Natural killer cell (primary cell): ENCODE measurements at regions of chr11 and their contacts with region 1.

Region 1: GRCh38 chr11:119057000-119057769 is at the start of gene HYOU1:
- DNase-seq: peak; percentile 98
- ATAC-seq: peak; percentile 92 to 99 (median 93)
- H3K4me3 ChIP-seq: peak within 1 kb of the TSS; percentile 70
- H3K4me3 Mint-ChIP-seq: peak within 1 kb of the TSS; percentile 98
- H3K27ac ChIP-seq: peak within 1 kb of the TSS; percentile 77
- H3K27ac Mint-ChIP-seq: peak within 1 kb of the TSS; percentile 96 to 98
- H3K4me1 ChIP-seq: peaks cover 24% of the 10 kb centered on the region
- H3K4me1 Mint-ChIP-seq: peaks cover 33 to 48% of the 10 kb centered on the region in 2 donors
- H3K27me3 ChIP-seq: no peaks in the 10 kb centered on the region
- H3K27me3 Mint-ChIP-seq: no peaks in the 10 kb centered on the region
- CTCF ChIP-seq: no peak
- total RNA-seq, gene HYOU1: 114 to 146 (median 123) TPM

Region 2: DNA sequence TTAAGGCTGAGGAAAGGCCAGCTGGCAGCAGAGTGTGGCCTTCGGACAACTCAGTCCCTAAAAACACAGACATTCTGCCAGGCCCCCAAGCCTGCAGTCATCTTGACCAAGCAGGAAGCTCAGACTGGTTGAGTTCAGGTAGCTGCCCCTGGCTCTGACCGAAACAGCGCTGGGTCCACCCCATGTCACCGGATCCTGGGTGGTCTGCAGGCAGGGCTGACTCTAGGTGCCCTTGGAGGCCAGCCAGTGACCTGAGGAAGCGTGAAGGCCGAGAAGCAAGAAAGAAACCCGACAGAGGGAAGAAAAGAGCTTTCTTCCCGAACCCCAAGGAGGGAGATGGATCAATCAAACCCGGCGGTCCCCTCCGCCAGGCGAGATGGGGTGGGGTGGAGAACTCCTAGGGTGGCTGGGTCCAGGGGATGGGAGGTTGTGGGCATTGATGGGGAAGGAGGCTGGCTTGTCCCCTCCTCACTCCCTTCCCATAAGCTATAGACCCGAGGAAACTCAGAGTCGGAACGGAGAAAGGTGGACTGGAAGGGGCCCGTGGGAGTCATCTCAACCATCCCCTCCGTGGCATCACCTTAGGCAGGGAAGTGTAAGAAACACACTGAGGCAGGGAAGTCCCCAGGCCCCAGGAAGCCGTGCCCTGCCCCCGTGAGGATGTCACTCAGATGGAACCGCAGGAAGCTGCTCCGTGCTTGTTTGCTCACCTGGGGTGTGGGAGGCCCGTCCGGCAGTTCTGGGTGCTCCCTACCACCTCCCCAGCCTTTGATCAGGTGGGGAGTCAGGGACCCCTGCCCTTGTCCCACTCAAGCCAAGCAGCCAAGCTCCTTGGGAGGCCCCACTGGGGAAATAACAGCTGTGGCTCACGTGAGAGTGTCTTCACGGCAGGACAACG is 161.8 kb before region 1 on chr11:
- intact Hi-C with region 1: no loop called
- DNase-seq: peak in 1 of 2 donors; percentile 91
- ATAC-seq: peak in 2 of 3 donors; percentile 32 to 34
- H3K4me3 ChIP-seq: no peak overlapping the region
- H3K4me3 Mint-ChIP-seq: peak overlapping the region; percentile 4
- H3K27ac ChIP-seq: peak overlapping the region; percentile 71
- H3K27ac Mint-ChIP-seq: peak overlapping the region; percentile 74 to 82
- H3K4me1 ChIP-seq: peaks cover 70% of the 10 kb centered on the region
- H3K4me1 Mint-ChIP-seq: peaks cover 36 to 57% of the 10 kb centered on the region in 2 donors
- H3K27me3 ChIP-seq: no peaks in the 10 kb centered on the region
- H3K27me3 Mint-ChIP-seq: no peaks in the 10 kb centered on the region
- CTCF ChIP-seq: no peak

Region 3: GRCh38 chr11:119018074-119018938 is 38.9 kb before region 1 on chr11 and contains the starts of genes RPS25 and TRAPPC4:
- intact Hi-C with region 1: loop called (anchors 5 kb)
- DNase-seq: peak; percentile 91 to 98
- ATAC-seq: peak; percentile 86 to 95 (median 86)
- H3K4me3 ChIP-seq: peak within 1 kb of the TSS; percentile 93
- H3K4me3 Mint-ChIP-seq: peak within 1 kb of the TSS; percentile 99
- H3K27ac ChIP-seq: peak within 1 kb of the TSS; percentile 94
- H3K27ac Mint-ChIP-seq: peak within 1 kb of the TSS; percentile 99
- H3K4me1 ChIP-seq: peaks cover 33% of the 10 kb centered on the region
- H3K4me1 Mint-ChIP-seq: peaks cover 18 to 27% of the 10 kb centered on the region in 2 donors
- H3K27me3 ChIP-seq: no peaks in the 10 kb centered on the region
- H3K27me3 Mint-ChIP-seq: no peaks in the 10 kb centered on the region
- CTCF ChIP-seq: no peak
- total RNA-seq, gene RPS25: 870 to 1,051 (median 887) TPM
- total RNA-seq, gene TRAPPC4: 71.4 to 84.5 (median 77.5) TPM

Region 4: DNA sequence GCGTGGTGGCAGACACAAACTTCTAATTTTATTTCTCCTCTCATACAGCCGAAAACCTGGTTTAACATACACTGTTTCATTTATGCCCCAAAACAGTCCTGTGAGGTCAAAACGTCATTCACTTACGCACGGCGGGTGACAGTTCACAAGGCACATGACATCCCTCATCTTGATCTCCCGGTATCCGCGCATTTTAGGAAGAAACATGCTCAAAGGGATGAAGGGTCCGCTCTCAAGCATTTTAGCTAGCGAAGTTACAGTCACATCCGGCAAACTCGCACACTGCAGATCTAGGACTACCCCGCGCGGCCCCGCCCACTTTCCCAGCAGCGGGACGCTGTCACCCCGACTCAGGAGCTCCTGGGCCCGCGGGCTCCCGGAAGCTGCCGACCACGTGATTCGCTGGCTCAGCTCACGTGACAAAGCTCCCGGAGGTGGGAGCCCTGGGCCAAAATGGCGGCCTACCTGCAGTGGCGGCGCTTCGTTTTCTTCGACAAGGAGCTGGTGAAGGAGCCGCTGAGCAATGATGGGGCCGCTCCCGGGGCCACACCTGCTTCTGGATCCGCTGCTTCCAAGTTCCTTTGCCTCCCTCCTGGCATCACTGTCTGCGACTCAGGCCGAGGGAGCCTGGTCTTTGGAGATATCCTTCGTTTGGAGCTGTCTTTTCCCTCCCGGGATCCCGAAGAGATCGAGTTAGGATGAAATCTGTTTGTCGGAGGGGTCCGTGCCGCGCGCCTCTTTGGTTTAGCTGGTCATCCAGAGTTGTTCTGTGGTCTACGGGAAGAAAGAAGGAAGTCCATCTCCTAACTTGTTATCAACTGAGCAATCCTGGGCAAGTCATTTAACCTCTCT is 10.4 kb after region 1 on chr11 and contains the start of gene VPS11:
- intact Hi-C with region 1: loop called (anchors 1 kb)
- DNase-seq: peak; percentile 95 to 99
- ATAC-seq: peak; percentile 92 to 99 (median 93)
- H3K4me3 ChIP-seq: peak within 1 kb of the TSS; percentile 91
- H3K4me3 Mint-ChIP-seq: peak within 1 kb of the TSS; percentile 95
- H3K27ac ChIP-seq: peak within 1 kb of the TSS; percentile 89
- H3K27ac Mint-ChIP-seq: peak within 1 kb of the TSS; percentile 98 to 99
- H3K4me1 ChIP-seq: peaks cover 19% of the 10 kb centered on the region
- H3K4me1 Mint-ChIP-seq: peaks cover 32 to 33% of the 10 kb centered on the region in 2 donors
- H3K27me3 ChIP-seq: no peaks in the 10 kb centered on the region
- H3K27me3 Mint-ChIP-seq: no peaks in the 10 kb centered on the region
- CTCF ChIP-seq: no peak
- total RNA-seq, gene VPS11: 91.4 to 101 (median 91.7) TPM

Region 5: GRCh38 chr11:119095066-119095880 is 38.1 kb after region 1 on chr11:
- intact Hi-C with region 1: loop called (anchors 1 kb)
- DNase-seq: peak; percentile 99
- ATAC-seq: peak; percentile 80 to 92 (median 86)
- H3K4me3 ChIP-seq: peak overlapping the region; percentile 70
- H3K4me3 Mint-ChIP-seq: peak overlapping the region; percentile 91
- H3K27ac ChIP-seq: peak overlapping the region; percentile 84
- H3K27ac Mint-ChIP-seq: peak overlapping the region; percentile 95 to 96
- H3K4me1 ChIP-seq: peaks cover 32% of the 10 kb centered on the region
- H3K4me1 Mint-ChIP-seq: peaks cover 34 to 43% of the 10 kb centered on the region in 2 donors
- H3K27me3 ChIP-seq: no peaks in the 10 kb centered on the region
- H3K27me3 Mint-ChIP-seq: no peaks in the 10 kb centered on the region
- CTCF ChIP-seq: peak; percentile 3